Naive thymus-derived CD8-positive, alpha-beta T cell (primary cell): ENCODE measurements at regions of chr2 and their contacts with region 1.

Region 1: GRCh38 chr2:74482801-74483674 is at the starts of genes CCDC142 and TTC31:
- DNase-seq: peak; percentile 80 to 99 (median 93)
- ATAC-seq: peak; percentile 91 to 93
- H3K4me3 Mint-ChIP-seq: peak within 1 kb of the TSS; percentile 90 to 100 (median 100)
- H3K27ac Mint-ChIP-seq: peak within 1 kb of the TSS; percentile 97 to 100 (median 100)
- H3K4me1 Mint-ChIP-seq: peaks cover 15 to 47% (median 36%) of the 10 kb centered on the region in 4 donors
- H3K27me3 Mint-ChIP-seq: no peaks in the 10 kb centered on the region
- polyA plus RNA-seq, gene CCDC142: 7.8 to 15.5 (median 14.6) TPM
- polyA plus RNA-seq, gene TTC31: 18.9 to 21.1 (median 21.1) TPM

Region 2: GRCh38 chr2:74458132-74458925 is 24.7 kb before region 1 on chr2 and contains the start of gene WBP1:
- POLR2A ChIA-PET with region 1: interaction called, 159 read pairs
- DNase-seq: peak; percentile 90 to 100 (median 100)
- ATAC-seq: peak; percentile 83 to 84
- H3K4me3 Mint-ChIP-seq: peak within 1 kb of the TSS; percentile 91 to 100 (median 98)
- H3K27ac Mint-ChIP-seq: peak within 1 kb of the TSS; percentile 94 to 100 (median 100)
- H3K4me1 Mint-ChIP-seq: peaks cover 42 to 73% (median 60%) of the 10 kb centered on the region in 4 donors
- H3K27me3 Mint-ChIP-seq: peaks cover 0 to 2% (median 0%) of the 10 kb centered on the region in 5 donors
- polyA plus RNA-seq, gene WBP1: 32.4 to 38.3 (median 34.2) TPM

Region 3: GRCh38 chr2:74464406-74464928 is 18.6 kb before region 1 on chr2:
- POLR2A ChIA-PET with region 1: interaction called, 159 read pairs
- DNase-seq: no peak
- ATAC-seq: no peak
- H3K4me3 Mint-ChIP-seq: peak overlapping the region; percentile 76 to 98 (median 84)
- H3K27ac Mint-ChIP-seq: peak overlapping the region in 9 of 10 donors; percentile 19 to 99 (median 74)
- H3K4me1 Mint-ChIP-seq: peaks cover 12 to 36% (median 32%) of the 10 kb centered on the region in 4 donors
- H3K27me3 Mint-ChIP-seq: no peaks in the 10 kb centered on the region

Region 4: GRCh38 chr2:74472086-74472944 is 10.7 kb before region 1 on chr2 and contains the start of gene MRPL53:
- POLR2A ChIA-PET with region 1: interaction called, 82 read pairs
- DNase-seq: peak; percentile 93 to 98 (median 96)
- ATAC-seq: peak; percentile 93 to 94
- H3K4me3 Mint-ChIP-seq: peak within 1 kb of the TSS; percentile 94 to 99 (median 98)
- H3K27ac Mint-ChIP-seq: peak within 1 kb of the TSS; percentile 98 to 100 (median 99)
- H3K4me1 Mint-ChIP-seq: peaks cover 16 to 37% (median 27%) of the 10 kb centered on the region in 4 donors
- H3K27me3 Mint-ChIP-seq: no peaks in the 10 kb centered on the region
- polyA plus RNA-seq, gene MRPL53: 148 to 171 (median 154) TPM

Region 5: DNA sequence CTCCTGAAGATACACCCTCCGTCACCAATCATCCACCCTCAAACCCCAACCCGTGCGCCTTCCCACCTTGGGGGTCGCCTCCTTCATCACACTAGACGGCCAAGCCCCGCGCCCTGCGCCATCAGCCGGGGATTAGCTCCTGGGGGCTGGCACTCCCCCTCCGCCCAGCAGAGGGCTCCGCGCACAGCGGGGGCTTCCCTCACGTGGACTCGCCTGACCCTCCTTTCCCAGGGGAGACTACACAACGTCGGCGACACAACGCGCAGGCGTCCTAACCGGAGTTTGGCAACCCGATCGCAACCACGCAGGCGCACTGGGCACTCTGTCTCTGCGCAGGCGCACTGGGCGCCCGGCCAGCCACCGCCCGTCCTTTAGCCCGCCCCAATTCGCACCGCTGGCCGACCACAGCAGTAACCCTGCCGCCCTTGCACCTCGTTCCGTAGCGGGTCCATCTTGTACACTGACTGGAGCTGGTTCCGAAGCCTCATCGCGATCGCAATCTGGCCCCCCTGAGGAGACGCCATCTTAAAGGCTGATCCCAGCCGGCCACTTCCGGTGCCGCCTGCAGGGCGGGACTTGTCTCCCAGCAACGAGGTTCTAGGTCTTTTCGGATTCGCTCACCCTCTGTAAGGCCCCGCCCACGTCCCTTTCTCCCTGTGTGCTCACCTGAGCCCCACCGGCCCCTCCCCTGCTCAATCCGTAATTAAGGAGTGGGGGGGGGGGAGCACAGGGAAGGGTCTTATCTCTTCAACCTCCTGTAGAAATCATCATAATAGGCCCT is 24.3 kb after region 1 on chr2 and contains the start of gene PCGF1:
- POLR2A ChIA-PET with region 1: interaction called, 17 read pairs
- DNase-seq: peak; percentile 92 to 100 (median 98)
- ATAC-seq: peak; percentile 88 to 95
- H3K4me3 Mint-ChIP-seq: peak within 1 kb of the TSS; percentile 95 to 100 (median 99)
- H3K27ac Mint-ChIP-seq: peak within 1 kb of the TSS; percentile 98 to 100 (median 100)
- H3K4me1 Mint-ChIP-seq: peaks cover 16 to 58% (median 54%) of the 10 kb centered on the region in 4 donors
- H3K27me3 Mint-ChIP-seq: peaks cover 14 to 64% (median 39%) of the 10 kb centered on the region in 5 donors
- polyA plus RNA-seq, gene PCGF1: 6.7 to 11.8 (median 7.3) TPM

Region 6: DNA sequence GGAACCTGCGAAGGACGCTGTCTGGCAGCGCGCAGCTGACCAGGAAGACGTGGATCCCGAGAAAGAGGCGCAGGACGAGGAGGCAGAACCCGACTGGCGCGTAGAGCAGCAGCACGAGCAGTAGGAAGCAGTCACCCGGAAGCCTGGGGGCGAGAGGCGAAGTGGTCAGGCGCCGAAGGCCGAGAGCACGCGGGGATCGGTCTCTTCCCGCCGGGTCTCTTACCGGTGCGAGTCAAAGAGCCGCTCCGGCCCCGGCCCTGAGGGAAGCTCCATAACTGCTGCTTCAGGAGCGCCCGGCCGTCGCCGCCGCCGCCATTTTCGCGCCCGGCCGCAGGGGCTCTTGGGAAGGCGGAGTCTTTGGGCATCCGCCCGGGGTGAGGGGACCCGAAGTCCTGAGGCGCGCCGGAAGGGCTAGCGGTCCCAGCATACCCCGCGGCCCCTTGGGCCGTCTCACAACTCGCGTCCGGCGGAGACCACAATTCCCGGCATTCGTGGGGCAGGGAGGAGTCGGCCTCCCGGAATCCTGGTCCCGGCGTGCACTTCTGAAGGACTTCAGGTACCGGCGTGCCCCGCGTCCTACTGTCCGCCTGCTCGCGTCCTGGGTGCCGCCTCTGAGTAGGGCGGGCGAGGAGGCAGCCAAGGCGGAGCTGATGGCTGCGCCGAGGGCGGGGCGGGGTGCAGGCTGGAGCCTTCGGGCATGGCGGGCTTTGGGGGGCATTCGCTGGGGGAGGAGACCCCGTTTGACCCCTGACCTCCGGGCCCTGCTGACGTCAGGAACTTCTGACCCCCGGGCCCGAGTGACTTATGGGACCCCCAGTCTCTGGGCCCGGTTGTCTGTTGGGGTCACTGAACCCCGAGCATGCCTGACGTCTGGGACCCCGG is 46.6 kb after region 1 on chr2 and contains the starts of genes AUP1 and HTRA2:
- POLR2A ChIA-PET with region 1: interaction called, 31 read pairs
- DNase-seq: peak; percentile 74 to 91 (median 80)
- ATAC-seq: peak; percentile 90 to 91
- H3K4me3 Mint-ChIP-seq: peak within 1 kb of the TSS; percentile 89 to 96 (median 94)
- H3K27ac Mint-ChIP-seq: peak within 1 kb of the TSS; percentile 78 to 97 (median 94)
- H3K4me1 Mint-ChIP-seq: peaks cover 22 to 50% (median 43%) of the 10 kb centered on the region in 4 donors
- H3K27me3 Mint-ChIP-seq: no peaks in the 10 kb centered on the region
- polyA plus RNA-seq, gene AUP1: 79.5 to 88.9 (median 81.8) TPM
- polyA plus RNA-seq, gene HTRA2: 21.3 to 24.5 (median 24.5) TPM

Region 7: DNA sequence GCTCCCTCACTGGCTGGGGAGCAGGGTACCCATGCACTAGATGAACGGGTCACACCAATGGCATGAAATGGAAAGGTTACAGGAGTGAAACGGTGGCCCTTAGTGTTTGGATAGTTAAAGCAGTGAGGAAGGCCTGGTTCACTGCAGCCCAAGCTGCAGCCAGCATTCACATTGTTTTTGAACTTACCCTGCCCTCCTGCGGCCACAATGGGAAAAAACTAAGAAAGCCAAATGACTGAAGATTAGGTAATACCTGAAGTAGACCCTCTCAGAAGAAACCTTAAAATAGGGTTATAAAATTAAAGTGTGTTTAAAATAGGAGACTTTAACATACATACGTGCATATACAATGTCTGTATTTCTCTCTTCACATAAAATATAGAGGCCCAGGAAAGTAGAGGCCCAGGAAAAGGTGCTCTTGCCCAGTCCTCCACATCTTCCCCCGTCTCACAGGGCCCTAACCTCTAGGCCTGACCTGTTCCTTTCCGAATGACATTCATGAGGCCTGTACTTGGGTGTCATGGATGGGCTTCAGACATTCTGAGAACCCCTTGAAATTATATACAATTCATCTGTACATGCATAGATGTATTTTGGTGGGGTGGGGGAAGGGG is 104.7 kb after region 1 on chr2:
- POLR2A ChIA-PET with region 1: interaction called, 23 read pairs
- DNase-seq: peak; percentile 15 to 81 (median 56)
- ATAC-seq: peak; percentile 86 to 97
- H3K4me3 Mint-ChIP-seq: no peak overlapping the region
- H3K27ac Mint-ChIP-seq: peak overlapping the region in 1 of 10 donors; percentile 69
- H3K4me1 Mint-ChIP-seq: peaks cover 0 to 6% (median 4%) of the 10 kb centered on the region in 4 donors
- H3K27me3 Mint-ChIP-seq: peaks cover 6 to 25% (median 11%) of the 10 kb centered on the region in 5 donors